ENCODE measurements at regions of chr12 and their contacts with region 1.

Region 1: GRCh38 chr12:107223821-107224220 is 130.5 kb upstream of the CRY1 start:
- DNase-seq: peak; percentile 18
- H3K4me3 ChIP-seq: no peak overlapping the region
- H3K27ac ChIP-seq: no peak overlapping the region
- H3K4me1 ChIP-seq: no peaks in the 10 kb centered on the region
- H3K27me3 ChIP-seq: no peaks in the 10 kb centered on the region
- CTCF ChIP-seq: 0 out of 2 replicates have a peak, but pooled peaks have one; percentile 14

Region 2: GRCh38 chr12:105580821-105581352 is 1642.9 kb before region 1 on chr12:
- CTCF ChIA-PET with region 1: interaction called, 20 read pairs
- POLR2A ChIA-PET with region 1: no interaction called
- intact Hi-C with region 1: no loop called
- DNase-seq: peak; percentile 50
- H3K4me3 ChIP-seq: no peak overlapping the region
- H3K27ac ChIP-seq: no peak overlapping the region
- H3K4me1 ChIP-seq: no peaks in the 10 kb centered on the region
- H3K27me3 ChIP-seq: peaks cover 9% of the 10 kb centered on the region
- CTCF ChIP-seq: no peak

Region 3: GRCh38 chr12:107736914-107737313 is 513.1 kb after region 1 on chr12:
- CTCF ChIA-PET with region 1: no interaction called
- POLR2A ChIA-PET with region 1: interaction called, 19 read pairs
- intact Hi-C with region 1: no loop called
- DNase-seq: no peak
- H3K4me3 ChIP-seq: no peak overlapping the region
- H3K27ac ChIP-seq: no peak overlapping the region
- H3K4me1 ChIP-seq: no peaks in the 10 kb centered on the region
- H3K27me3 ChIP-seq: no peaks in the 10 kb centered on the region
- CTCF ChIP-seq: no peak

Measured in A673 (cell line).